HEK293 (cell line): ENCODE measurements at regions of chr3 and their contacts with region 1.

Region 1: DNA sequence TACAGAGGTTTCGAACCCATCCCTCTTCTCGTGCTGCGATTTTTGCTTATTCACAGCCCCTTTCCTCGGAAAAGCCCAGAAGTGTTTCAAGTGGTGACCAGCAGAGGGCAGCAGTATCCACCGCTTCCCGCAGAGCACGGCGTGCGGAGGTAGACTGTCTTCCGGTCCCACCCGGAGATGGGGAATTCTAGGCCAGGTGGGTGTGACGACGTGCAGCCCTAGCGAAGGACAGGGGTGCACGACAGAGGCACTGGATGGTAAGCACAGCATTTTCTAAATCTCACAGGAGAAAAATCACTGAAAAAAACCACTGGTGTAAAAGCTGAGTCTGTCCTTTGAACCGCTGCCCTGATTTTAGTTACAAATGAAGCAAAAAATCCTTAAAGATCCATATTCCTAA is 7.4 kb upstream of the PSMD6 start:
- H3K4me3 ChIP-seq: no peak overlapping the region
- H3K27ac ChIP-seq: no peak overlapping the region
- H3K4me1 ChIP-seq: no peaks in the 10 kb centered on the region
- CTCF ChIP-seq: peak; percentile 74

Region 2: GRCh38 chr3:64166584-64167162 is 135.9 kb after region 1 on chr3:
- CTCF ChIA-PET with region 1: interaction called, 21 read pairs
- POLR2A ChIA-PET with region 1: no interaction called
- H3K4me3 ChIP-seq: no peak overlapping the region
- H3K27ac ChIP-seq: no peak overlapping the region
- H3K4me1 ChIP-seq: peaks cover 16% of the 10 kb centered on the region
- CTCF ChIP-seq: no peak

Region 3: DNA sequence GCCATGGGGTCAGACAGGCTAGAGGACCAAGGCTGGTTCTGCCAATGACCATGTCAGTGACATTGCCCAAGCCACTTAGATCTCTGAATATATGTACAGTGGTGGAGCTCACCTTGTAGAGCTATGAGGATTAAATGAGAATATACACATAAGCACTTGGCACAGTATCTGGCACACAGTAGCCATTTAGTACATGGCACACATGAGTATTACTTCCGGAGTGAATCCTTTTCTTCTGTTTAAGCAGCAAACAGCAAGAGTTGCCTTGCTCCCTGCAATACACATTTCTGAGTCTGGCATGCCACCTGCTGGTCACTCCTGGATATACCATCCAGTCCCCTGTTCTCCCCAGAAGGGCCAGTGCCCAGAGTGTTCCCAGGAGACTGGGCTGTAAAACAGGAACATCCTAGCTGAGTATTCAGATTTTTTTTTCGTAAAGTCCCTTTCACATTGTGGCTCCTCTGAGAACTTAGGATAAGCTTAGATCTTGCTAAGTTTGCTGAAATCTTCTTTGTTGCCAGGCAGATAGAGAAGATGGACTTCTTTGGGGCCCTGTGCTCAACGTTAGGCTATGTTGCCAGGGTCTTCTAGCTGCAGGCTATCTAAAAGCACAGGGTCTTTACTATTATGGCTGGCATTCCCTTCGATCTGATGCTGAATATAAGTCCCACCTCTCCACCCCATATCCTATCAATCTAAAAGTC is 453.7 kb after region 1 on chr3:
- CTCF ChIA-PET with region 1: interaction called, 20 read pairs
- POLR2A ChIA-PET with region 1: no interaction called
- H3K4me3 ChIP-seq: no peak overlapping the region
- H3K27ac ChIP-seq: no peak overlapping the region
- H3K4me1 ChIP-seq: no peaks in the 10 kb centered on the region; the same call in 1 of the 2 replicates
- CTCF ChIP-seq: peak; percentile 63